Naive thymus-derived CD4-positive, alpha-beta T cell (primary cell): ENCODE measurements at regions of chr11 and their contacts with region 1.

Region 1: GRCh38 chr11:123062158-123062891 is 389 bp upstream of the HSPA8 start:
- DNase-seq: peak; percentile 97 to 100 (median 100)
- ATAC-seq: peak; percentile 89
- H3K4me3 ChIP-seq: peak overlapping the region; percentile 91
- H3K4me3 Mint-ChIP-seq: peak overlapping the region; percentile 87 to 100 (median 99)
- H3K27ac ChIP-seq: peak overlapping the region; percentile 96
- H3K27ac Mint-ChIP-seq: peak overlapping the region; percentile 96 to 100 (median 99)
- H3K4me1 ChIP-seq: peaks cover 42 to 55% of the 10 kb centered on the region in 2 donors
- H3K4me1 Mint-ChIP-seq: peaks cover 48 to 67% (median 56%) of the 10 kb centered on the region in 7 donors
- H3K27me3 ChIP-seq: no peaks in the 10 kb centered on the region
- H3K27me3 Mint-ChIP-seq: peaks cover 0 to 7% (median 0%) of the 10 kb centered on the region in 5 donors

Region 2: GRCh38 chr11:122697636-122698167 is 364.6 kb before region 1 on chr11:
- CTCF ChIA-PET with region 1: no interaction called
- POLR2A ChIA-PET with region 1: interaction called, 15 read pairs
- intact Hi-C with region 1: loop called in 1 of 2 experiments (anchors 2 kb)
- DNase-seq: peak in 7 of 9 donors; percentile 53 to 78 (median 69)
- ATAC-seq: peak; percentile 85
- H3K4me3 ChIP-seq: peak overlapping the region; percentile 33
- H3K4me3 Mint-ChIP-seq: peak overlapping the region; percentile 61 to 93 (median 82)
- H3K27ac ChIP-seq: peak overlapping the region; percentile 75
- H3K27ac Mint-ChIP-seq: peak overlapping the region; percentile 88 to 99 (median 96)
- H3K4me1 ChIP-seq: peaks cover 34 to 62% of the 10 kb centered on the region in 2 donors
- H3K4me1 Mint-ChIP-seq: peaks cover 53 to 99% (median 88%) of the 10 kb centered on the region in 7 donors
- H3K27me3 ChIP-seq: no peaks in the 10 kb centered on the region
- H3K27me3 Mint-ChIP-seq: peaks cover 0 to 3% (median 0%) of the 10 kb centered on the region in 5 donors

Region 3: GRCh38 chr11:122853971-122854446 is 208.3 kb before region 1 on chr11:
- CTCF ChIA-PET with region 1: no interaction called
- POLR2A ChIA-PET with region 1: interaction called, 20 read pairs
- intact Hi-C with region 1: no loop called
- DNase-seq: peak in 8 of 9 donors; percentile 27 to 70 (median 63)
- ATAC-seq: no peak
- H3K4me3 ChIP-seq: no peak overlapping the region
- H3K4me3 Mint-ChIP-seq: peak overlapping the region in 3 of 10 donors; percentile 31 to 33 (median 32)
- H3K27ac ChIP-seq: no peak overlapping the region
- H3K27ac Mint-ChIP-seq: peak overlapping the region in 5 of 9 donors; percentile 28 to 67 (median 49)
- H3K4me1 ChIP-seq: peaks cover 21 to 42% of the 10 kb centered on the region in 2 donors
- H3K4me1 Mint-ChIP-seq: peaks cover 25 to 44% (median 32%) of the 10 kb centered on the region in 7 donors
- H3K27me3 ChIP-seq: no peaks in the 10 kb centered on the region
- H3K27me3 Mint-ChIP-seq: peaks cover 0 to 11% (median 0%) of the 10 kb centered on the region in 5 donors

Region 4: GRCh38 chr11:123083623-123084029 is 21.3 kb after region 1 on chr11:
- CTCF ChIA-PET with region 1: interaction called, 8 read pairs
- POLR2A ChIA-PET with region 1: interaction called, 653 read pairs
- intact Hi-C with region 1: loop called (anchors 1 kb)
- DNase-seq: peak in 4 of 9 donors; percentile 26 to 74 (median 52)
- ATAC-seq: peak; percentile 71
- H3K4me3 ChIP-seq: peak overlapping the region; percentile 17
- H3K4me3 Mint-ChIP-seq: peak overlapping the region; percentile 34 to 79 (median 68)
- H3K27ac ChIP-seq: no peak overlapping the region
- H3K27ac Mint-ChIP-seq: peak overlapping the region; percentile 51 to 98 (median 82)
- H3K4me1 ChIP-seq: peaks cover 27 to 54% of the 10 kb centered on the region in 2 donors
- H3K4me1 Mint-ChIP-seq: peaks cover 34 to 74% (median 55%) of the 10 kb centered on the region in 7 donors
- H3K27me3 ChIP-seq: no peaks in the 10 kb centered on the region
- H3K27me3 Mint-ChIP-seq: no peaks in the 10 kb centered on the region

Region 5: DNA sequence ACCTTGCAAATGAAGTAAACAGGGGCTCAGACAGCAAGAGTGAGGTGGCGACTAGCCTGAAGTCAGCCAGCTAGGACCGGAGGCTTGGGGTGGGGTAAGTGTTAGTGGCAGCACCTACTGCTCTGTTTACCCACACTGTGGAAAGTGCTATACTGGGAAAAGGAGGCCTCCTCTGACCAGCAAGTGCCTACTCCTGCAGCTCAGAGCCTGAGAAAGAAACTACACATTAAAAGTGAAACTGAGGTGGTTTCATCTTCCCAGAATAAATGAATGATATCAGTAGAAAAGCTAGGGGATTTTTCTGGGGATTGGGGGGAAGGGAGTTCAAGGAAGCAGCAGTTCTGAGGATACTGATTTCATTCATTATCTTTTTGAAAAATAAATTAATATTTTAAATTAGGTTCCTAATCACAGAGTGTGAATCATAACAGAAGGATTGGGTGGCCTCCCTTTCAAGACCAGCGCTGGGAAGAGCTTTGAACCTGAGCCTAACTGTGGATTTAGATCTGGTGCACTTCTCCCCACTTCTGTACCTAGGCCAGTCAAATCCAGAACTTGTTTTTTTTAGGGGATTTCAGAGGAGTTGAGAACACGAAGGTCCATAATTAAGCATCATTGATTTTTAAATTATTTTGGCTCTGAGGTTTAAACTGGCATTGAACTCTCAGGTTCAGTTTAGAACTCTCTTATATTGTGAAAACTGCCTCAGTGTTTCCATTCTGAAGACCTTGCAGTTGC is 319.7 kb after region 1 on chr11:
- CTCF ChIA-PET with region 1: no interaction called
- POLR2A ChIA-PET with region 1: no interaction called
- intact Hi-C with region 1: loop called in 1 of 2 experiments (anchors 10 kb)
- DNase-seq: peak in 1 of 9 donors; percentile 65
- ATAC-seq: peak; percentile 45
- H3K4me3 ChIP-seq: no peak overlapping the region
- H3K4me3 Mint-ChIP-seq: peak overlapping the region in 1 of 10 donors; percentile 77
- H3K27ac ChIP-seq: no peak overlapping the region
- H3K27ac Mint-ChIP-seq: peak overlapping the region in 1 of 9 donors; percentile 86
- H3K4me1 ChIP-seq: peaks cover 0 to 6% of the 10 kb centered on the region in 2 donors
- H3K4me1 Mint-ChIP-seq: peaks cover 0 to 48% (median 3%) of the 10 kb centered on the region in 7 donors
- H3K27me3 ChIP-seq: peaks cover 0 to 3% of the 10 kb centered on the region in 2 donors
- H3K27me3 Mint-ChIP-seq: no peaks in the 10 kb centered on the region